ENCODE measurements at regions of chr5 and their contacts with region 1.

Region 1: GRCh38 chr5:20972419-20972925 is 984.5 kb upstream of the CDH18 start:
- DNase-seq: peak; percentile 79
- ATAC-seq: peak; percentile 90
- H3K4me3 ChIP-seq: peak overlapping the region; percentile 56
- H3K27ac ChIP-seq: no peak overlapping the region
- H3K4me1 ChIP-seq: peaks cover 22% of the 10 kb centered on the region
- H3K27me3 ChIP-seq: no peaks in the 10 kb centered on the region
- CTCF ChIP-seq: peak; percentile 91

Region 2: GRCh38 chr5:21152610-21153009 is 180.1 kb after region 1 on chr5:
- CTCF ChIA-PET with region 1: interaction called, 6 read pairs
- POLR2A ChIA-PET with region 1: no interaction called
- intact Hi-C with region 1: loop called (anchors 1 kb)
- DNase-seq: peak; percentile 100
- ATAC-seq: peak; percentile 72
- H3K4me3 ChIP-seq: no peak overlapping the region
- H3K27ac ChIP-seq: peak overlapping the region; percentile 57
- H3K4me1 ChIP-seq: peaks cover 35% of the 10 kb centered on the region
- H3K27me3 ChIP-seq: no peaks in the 10 kb centered on the region
- CTCF ChIP-seq: no peak

Region 3: GRCh38 chr5:21171066-21171465 is 198.6 kb after region 1 on chr5:
- CTCF ChIA-PET with region 1: no interaction called
- POLR2A ChIA-PET with region 1: no interaction called
- intact Hi-C with region 1: loop called (anchors 1 kb)
- DNase-seq: peak; percentile 70
- ATAC-seq: peak; percentile 77
- H3K4me3 ChIP-seq: no peak overlapping the region
- H3K27ac ChIP-seq: peak overlapping the region; percentile 30
- H3K4me1 ChIP-seq: peaks cover 28% of the 10 kb centered on the region
- H3K27me3 ChIP-seq: no peaks in the 10 kb centered on the region
- CTCF ChIP-seq: no peak

Region 4: DNA sequence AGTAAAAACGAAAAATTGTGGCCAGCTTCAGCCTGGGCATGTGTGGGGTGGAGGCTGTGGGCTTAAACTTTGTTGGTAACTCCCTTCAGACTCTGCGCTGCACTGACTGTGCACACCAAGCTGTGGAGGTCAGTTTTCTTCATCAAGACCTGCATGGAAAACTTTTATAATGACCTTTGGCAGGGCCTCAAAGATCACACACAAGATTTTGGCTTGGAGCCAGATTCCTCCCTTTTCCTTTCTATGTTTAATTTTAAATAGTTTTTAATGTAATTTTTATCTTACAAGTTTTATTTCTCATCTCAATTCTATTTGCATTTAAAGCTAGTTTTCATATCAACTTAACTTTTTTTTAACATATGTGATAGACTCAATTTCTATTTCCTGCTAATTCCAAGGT is 226.6 kb after region 1 on chr5:
- CTCF ChIA-PET with region 1: no interaction called
- POLR2A ChIA-PET with region 1: no interaction called
- intact Hi-C with region 1: loop called (anchors 10 kb)
- DNase-seq: no peak
- ATAC-seq: no peak
- H3K4me3 ChIP-seq: no peak overlapping the region
- H3K27ac ChIP-seq: no peak overlapping the region
- H3K4me1 ChIP-seq: peaks cover 16% of the 10 kb centered on the region
- H3K27me3 ChIP-seq: no peaks in the 10 kb centered on the region
- CTCF ChIP-seq: no peak

Region 5: DNA sequence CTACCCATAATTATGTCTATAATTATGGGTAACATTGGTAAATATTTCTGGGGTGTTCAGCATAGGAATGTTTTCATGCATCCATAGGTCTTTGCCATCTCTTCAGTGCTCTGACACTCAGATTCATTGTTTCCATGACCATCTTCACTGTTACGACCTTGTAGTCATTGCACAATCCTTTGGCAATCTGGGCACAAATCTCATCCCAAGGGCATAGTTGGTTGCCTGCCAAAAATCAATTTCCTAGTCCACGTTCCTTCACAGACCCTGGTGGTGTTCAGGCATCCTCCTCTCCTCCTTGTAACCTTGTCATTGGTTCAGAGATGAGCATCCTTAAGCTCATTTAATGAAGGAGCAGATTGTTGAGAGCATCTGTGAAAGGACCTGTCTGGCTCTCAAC is 480.0 kb after region 1 on chr5:
- CTCF ChIA-PET with region 1: no interaction called
- POLR2A ChIA-PET with region 1: no interaction called
- intact Hi-C with region 1: loop called (anchors 5 kb)
- DNase-seq: no peak
- ATAC-seq: no peak
- H3K4me3 ChIP-seq: no peak overlapping the region
- H3K27ac ChIP-seq: no peak overlapping the region
- H3K4me1 ChIP-seq: no peaks in the 10 kb centered on the region
- H3K27me3 ChIP-seq: no peaks in the 10 kb centered on the region
- CTCF ChIP-seq: no peak

Region 6: DNA sequence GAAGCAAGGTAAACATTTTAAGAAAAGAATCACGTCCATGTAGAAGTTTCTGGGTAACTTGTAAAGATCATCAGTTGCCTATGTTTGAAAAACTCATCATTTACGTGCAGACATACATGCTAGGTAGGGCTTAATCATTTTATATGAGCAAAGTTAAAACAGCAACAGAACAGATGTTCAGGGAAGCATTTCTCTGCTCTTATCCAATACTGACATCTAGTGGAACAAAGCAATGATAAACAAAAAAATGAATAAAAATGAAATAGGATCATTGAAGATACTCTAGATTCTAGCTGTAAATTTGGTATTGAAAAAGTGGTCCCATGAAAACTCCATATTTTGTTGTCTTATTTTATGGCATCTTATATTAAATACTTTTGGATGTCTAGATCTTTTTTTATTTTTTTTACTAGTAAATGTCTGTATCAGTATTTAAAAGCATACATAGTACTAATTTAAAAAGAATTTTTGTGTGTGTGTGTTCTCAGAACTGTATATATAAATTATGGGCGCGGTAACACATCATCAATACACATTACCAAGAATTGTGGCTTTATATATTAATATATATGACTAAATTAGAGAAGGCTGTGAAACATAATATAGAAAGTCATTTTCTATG is 830.5 kb after region 1 on chr5:
- CTCF ChIA-PET with region 1: no interaction called
- POLR2A ChIA-PET with region 1: no interaction called
- intact Hi-C with region 1: loop called (anchors 5 kb)
- DNase-seq: peak; percentile 79
- ATAC-seq: peak; percentile 57
- H3K4me3 ChIP-seq: no peak overlapping the region
- H3K27ac ChIP-seq: no peak overlapping the region
- H3K4me1 ChIP-seq: peaks cover 22% of the 10 kb centered on the region
- H3K27me3 ChIP-seq: no peaks in the 10 kb centered on the region
- CTCF ChIP-seq: peak; percentile 95

Measured in PC-3 (cell line).